Heart left ventricle (tissue), 16 donors: ENCODE measurements at regions of chr11 and their contacts with region 1.

Region 1: GRCh38 chr11:106983261-106983660 is 35.0 kb downstream of the GUCY1A2 start:
- DNase-seq: peak in 2 of 5 donors; percentile 25 to 29
- ATAC-seq: peak in 3 of 4 donors; percentile 44 to 63 (median 45)
- H3K4me3 ChIP-seq: no peak overlapping the region
- H3K27ac ChIP-seq: peak overlapping the region in 1 of 12 donors; percentile 7
- H3K4me1 ChIP-seq: peaks cover 0 to 15% (median 0%) of the 10 kb centered on the region in 12 donors
- H3K27me3 ChIP-seq: no peaks in the 10 kb centered on the region
- CTCF ChIP-seq: no peak
- POLR2A ChIP-seq: no peak

Region 2: DNA sequence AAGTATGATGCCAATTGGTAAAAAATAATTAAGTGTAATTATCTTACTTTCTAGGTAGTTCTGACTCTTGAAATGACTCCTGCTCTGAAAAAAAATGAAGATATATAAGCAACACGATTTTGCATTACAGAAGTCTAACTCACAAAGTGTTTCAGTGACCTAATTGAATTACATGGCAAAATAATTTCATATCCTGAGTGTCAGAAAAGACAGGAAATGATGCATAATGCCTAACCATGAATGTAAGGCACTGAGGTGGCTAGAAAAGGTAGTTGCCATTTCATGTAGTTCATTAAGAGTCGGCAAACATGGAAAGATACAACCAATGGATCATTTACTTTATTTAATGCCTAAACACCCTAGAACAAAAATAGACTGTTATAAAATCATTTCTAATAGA is 78.4 kb before region 1 on chr11:
- intact Hi-C with region 1: loop called in 1 of 10 experiments (anchors 2 kb)
- DNase-seq: no peak
- ATAC-seq: no peak
- H3K4me3 ChIP-seq: no peak overlapping the region
- H3K27ac ChIP-seq: no peak overlapping the region
- H3K4me1 ChIP-seq: no peaks in the 10 kb centered on the region
- H3K27me3 ChIP-seq: no peaks in the 10 kb centered on the region
- CTCF ChIP-seq: no peak
- POLR2A ChIP-seq: no peak